ENCODE measurements at regions of chr3 and their contacts with region 1.

Region 1: GRCh38 chr3:113594066-113594465 is 61.7 kb downstream of the SIDT1 start:
- DNase-seq: no peak
- CTCF ChIP-seq: no peak

Region 2: DNA sequence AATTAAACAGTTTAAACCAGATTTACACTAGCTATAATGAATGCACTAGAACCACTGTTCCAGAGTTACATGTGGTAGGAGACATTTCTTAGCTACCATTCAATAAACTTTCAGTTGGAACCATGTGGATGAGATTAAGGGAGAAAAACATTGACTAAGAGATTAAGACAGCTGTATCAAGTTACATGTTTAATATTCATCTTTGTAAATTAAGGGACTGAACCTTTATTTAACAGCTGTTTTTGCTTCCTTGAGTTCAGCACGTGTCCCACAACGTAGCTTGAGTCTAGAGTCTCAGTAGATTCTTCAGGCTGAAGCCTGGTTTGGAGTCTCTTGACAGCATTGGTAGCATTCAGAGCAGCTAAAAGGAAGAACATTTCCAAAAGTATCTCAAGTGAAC is 125.5 kb before region 1 on chr3:
- CTCF ChIA-PET with region 1: no interaction called
- POLR2A ChIA-PET with region 1: no interaction called
- DNase-seq: no peak
- CTCF ChIP-seq: no peak

Region 3: GRCh38 chr3:113606539-113607218 is 12.6 kb after region 1 on chr3:
- CTCF ChIA-PET with region 1: interaction called, 10 read pairs
- POLR2A ChIA-PET with region 1: no interaction called
- DNase-seq: peak; percentile 78
- CTCF ChIP-seq: no peak

Measured in GM10248 (cell line).